Endothelial cell of umbilical vein (primary cell): ENCODE measurements at regions of chr18 and their contacts with region 1.

Region 1: GRCh38 chr18:32919799-32920198 is 147.0 kb upstream of the KLHL14 start:
- DNase-seq: no peak
- H3K4me3 ChIP-seq: no peak overlapping the region
- H3K27ac ChIP-seq: no peak overlapping the region
- H3K4me1 ChIP-seq: peaks cover 13% of the 10 kb centered on the region
- H3K27me3 ChIP-seq: peaks cover 0 to 2% of the 10 kb centered on the region in 2 experiments
- CTCF ChIP-seq: peak in 1 of 2 donors; percentile 27
- POLR2A ChIP-seq: no peak

Region 2: GRCh38 chr18:32714571-32715148 is 205.1 kb before region 1 on chr18:
- CTCF ChIA-PET with region 1: interaction called, 5 read pairs
- POLR2A ChIA-PET with region 1: no interaction called
- dilution Hi-C with region 1: no loop called
- intact Hi-C with region 1: loop called (anchors 2 kb)
- DNase-seq: peak; percentile 81
- H3K4me3 ChIP-seq: no peak overlapping the region
- H3K27ac ChIP-seq: no peak overlapping the region
- H3K4me1 ChIP-seq: no peaks in the 10 kb centered on the region
- H3K27me3 ChIP-seq: peaks cover 2 to 5% of the 10 kb centered on the region in 2 experiments
- CTCF ChIP-seq: peak; percentile 67 to 70
- POLR2A ChIP-seq: no peak

Region 3: DNA sequence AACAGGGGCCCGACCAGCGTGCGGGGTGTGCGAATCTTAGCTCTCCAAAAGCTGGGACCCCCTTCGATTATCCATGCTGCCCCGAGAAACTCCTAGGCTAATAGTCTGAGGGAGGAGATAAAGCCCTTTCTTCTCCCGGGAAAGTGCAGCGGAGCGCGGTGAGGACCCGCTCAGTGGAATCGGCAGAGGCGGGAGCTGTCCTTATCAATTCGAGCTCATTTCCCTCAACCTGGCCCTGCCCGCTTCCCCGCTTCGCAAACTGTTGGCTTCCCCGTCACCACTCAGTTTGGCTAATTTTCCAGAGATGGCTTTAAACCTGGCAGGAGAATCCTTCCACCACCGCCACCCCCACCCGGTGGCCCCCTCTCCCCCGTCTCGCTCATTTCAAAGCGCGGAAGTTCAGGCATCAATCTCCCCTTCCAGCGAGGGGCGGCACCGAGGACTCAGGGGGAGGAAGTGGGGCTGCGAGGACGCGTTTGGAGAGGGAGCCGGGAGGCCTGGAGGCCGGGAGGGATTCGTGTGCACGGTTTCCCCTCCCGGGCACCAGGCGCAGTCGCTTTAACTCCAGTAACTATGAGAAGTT is 148.5 kb before region 1 on chr18:
- CTCF ChIA-PET with region 1: no interaction called
- POLR2A ChIA-PET with region 1: no interaction called
- dilution Hi-C with region 1: no loop called
- intact Hi-C with region 1: loop called (anchors 5 kb)
- DNase-seq: no peak
- H3K4me3 ChIP-seq: peak overlapping the region; percentile 31 to 50 (median 37)
- H3K27ac ChIP-seq: no peak overlapping the region
- H3K4me1 ChIP-seq: peaks cover 13% of the 10 kb centered on the region
- H3K27me3 ChIP-seq: peaks cover 40 to 51% of the 10 kb centered on the region in 2 experiments
- CTCF ChIP-seq: no peak
- POLR2A ChIP-seq: no peak

Region 4: GRCh38 chr18:32930695-32931301 is 11.0 kb after region 1 on chr18:
- CTCF ChIA-PET with region 1: interaction called, 11 read pairs
- POLR2A ChIA-PET with region 1: no interaction called
- dilution Hi-C with region 1: no loop called
- intact Hi-C with region 1: no loop called
- DNase-seq: peak; percentile 47
- H3K4me3 ChIP-seq: no peak overlapping the region
- H3K27ac ChIP-seq: no peak overlapping the region
- H3K4me1 ChIP-seq: no peaks in the 10 kb centered on the region
- H3K27me3 ChIP-seq: no peaks in the 10 kb centered on the region
- CTCF ChIP-seq: peak; percentile 60 to 64
- POLR2A ChIP-seq: no peak

Region 5: GRCh38 chr18:33184958-33185357 is 265.2 kb after region 1 on chr18:
- CTCF ChIA-PET with region 1: no interaction called
- POLR2A ChIA-PET with region 1: no interaction called
- dilution Hi-C with region 1: no loop called
- intact Hi-C with region 1: loop called (anchors 5 kb)
- DNase-seq: peak; percentile 12
- H3K4me3 ChIP-seq: no peak overlapping the region
- H3K27ac ChIP-seq: peak overlapping the region; percentile 77
- H3K4me1 ChIP-seq: peaks cover 16% of the 10 kb centered on the region
- H3K27me3 ChIP-seq: no peaks in the 10 kb centered on the region
- CTCF ChIP-seq: no peak
- POLR2A ChIP-seq: no peak

Region 6: DNA sequence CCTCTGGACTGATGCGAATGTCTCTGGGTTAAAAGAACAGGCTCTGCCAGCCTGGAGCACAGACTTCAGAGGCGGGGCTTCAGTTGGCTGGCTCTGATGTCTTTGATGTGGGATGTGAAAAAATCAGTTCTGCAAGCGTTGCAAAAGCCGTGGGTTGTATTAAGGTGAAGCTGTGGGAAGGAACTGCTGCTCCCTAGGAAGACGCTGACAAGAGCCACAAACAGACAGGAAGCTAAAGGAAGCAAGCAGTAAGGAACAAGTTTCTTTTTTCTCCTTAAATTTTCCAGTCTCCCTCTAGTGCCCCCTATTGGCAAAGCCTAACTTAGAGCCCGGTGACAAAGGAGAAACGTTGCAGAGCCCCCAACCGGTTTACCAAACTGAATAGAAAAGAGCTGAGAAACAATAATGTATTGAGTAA is 281.7 kb after region 1 on chr18:
- CTCF ChIA-PET with region 1: no interaction called
- POLR2A ChIA-PET with region 1: no interaction called
- dilution Hi-C with region 1: no loop called
- intact Hi-C with region 1: loop called (anchors 5 kb)
- DNase-seq: peak; percentile 75
- H3K4me3 ChIP-seq: peak overlapping the region in 2 of 3 experiments; percentile 10 to 12
- H3K27ac ChIP-seq: no peak overlapping the region
- H3K4me1 ChIP-seq: peaks cover 2% of the 10 kb centered on the region
- H3K27me3 ChIP-seq: no peaks in the 10 kb centered on the region
- CTCF ChIP-seq: peak; percentile 65 to 77
- POLR2A ChIP-seq: no peak